Panc1 (cell line): ENCODE measurements at regions of chrX and their contacts with region 1.

Region 1: GRCh38 chrX:149470955-149471354 is 34.2 kb downstream of the IDS start:
- DNase-seq: peak; percentile 39
- ATAC-seq: peak; percentile 97
- H3K4me3 ChIP-seq: no peak overlapping the region
- H3K27ac ChIP-seq: no peak overlapping the region
- H3K4me1 ChIP-seq: no peaks in the 10 kb centered on the region
- H3K27me3 ChIP-seq: 0 out of 2 replicates have a peak, but pooled peaks cover 2% of the 10 kb centered on the region
- CTCF ChIP-seq: peak; percentile 91

Region 2: GRCh38 chrX:148049441-148049840 is 1421.5 kb before region 1 on chrX:
- CTCF ChIA-PET with region 1: interaction called, 3 read pairs
- POLR2A ChIA-PET with region 1: no interaction called
- in situ Hi-C with region 1: no loop called
- intact Hi-C with region 1: loop called (anchors 5 kb)
- DNase-seq: peak; percentile 18
- ATAC-seq: no peak
- H3K4me3 ChIP-seq: no peak overlapping the region
- H3K27ac ChIP-seq: no peak overlapping the region
- H3K4me1 ChIP-seq: no peaks in the 10 kb centered on the region
- H3K27me3 ChIP-seq: no peaks in the 10 kb centered on the region
- CTCF ChIP-seq: peak; percentile 63; the same call in 1 of the 2 replicates

Region 3: DNA sequence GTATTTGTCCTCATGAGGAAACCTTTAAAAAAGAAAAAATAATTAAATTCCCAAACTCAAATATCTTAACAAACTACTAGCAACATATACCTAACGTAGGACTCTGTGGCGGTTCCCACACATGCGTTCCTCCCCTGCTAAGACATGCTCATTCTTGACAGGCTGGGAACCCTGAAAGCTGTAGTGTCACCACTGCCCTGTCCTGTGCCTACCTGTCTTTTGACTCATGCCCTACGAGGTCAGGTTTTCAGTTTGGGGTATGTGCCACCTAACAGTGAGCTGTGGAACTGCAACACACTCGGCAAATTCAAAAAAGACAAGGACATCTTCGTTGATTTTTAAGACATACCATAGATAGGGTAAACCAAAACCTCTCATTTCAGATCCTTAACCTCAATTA is 16.3 kb after region 1 on chrX:
- CTCF ChIA-PET with region 1: no interaction called
- POLR2A ChIA-PET with region 1: no interaction called
- in situ Hi-C with region 1: no loop called
- intact Hi-C with region 1: no loop called
- DNase-seq: no peak
- ATAC-seq: peak; percentile 58; the same call in 1 of the 2 replicates
- H3K4me3 ChIP-seq: no peak overlapping the region
- H3K27ac ChIP-seq: no peak overlapping the region
- H3K4me1 ChIP-seq: no peaks in the 10 kb centered on the region
- H3K27me3 ChIP-seq: no peaks in the 10 kb centered on the region
- CTCF ChIP-seq: peak; percentile 53